Calu3 (cell line): ENCODE measurements at regions of chr6 and their contacts with region 1.

Region 1: GRCh38 chr6:95249175-95249574 is 328.2 kb upstream of the MANEA start:
- DNase-seq: no peak
- H3K4me3 Mint-ChIP-seq: no peak overlapping the region
- H3K27ac Mint-ChIP-seq: no peak overlapping the region
- H3K4me1 Mint-ChIP-seq: no peaks in the 10 kb centered on the region
- H3K27me3 Mint-ChIP-seq: no peaks in the 10 kb centered on the region
- CTCF ChIP-seq: no peak

Region 2: GRCh38 chr6:95208621-95209020 is 40.6 kb before region 1 on chr6:
- CTCF ChIA-PET with region 1: no interaction called
- intact Hi-C with region 1: loop called (anchors 5 kb)
- DNase-seq: no peak
- H3K4me3 Mint-ChIP-seq: no peak overlapping the region
- H3K27ac Mint-ChIP-seq: no peak overlapping the region
- H3K4me1 Mint-ChIP-seq: no peaks in the 10 kb centered on the region
- H3K27me3 Mint-ChIP-seq: no peaks in the 10 kb centered on the region
- CTCF ChIP-seq: no peak